Heart left ventricle (tissue), 16 donors: ENCODE measurements at regions of chr14 and their contacts with region 1.

Region 1: DNA sequence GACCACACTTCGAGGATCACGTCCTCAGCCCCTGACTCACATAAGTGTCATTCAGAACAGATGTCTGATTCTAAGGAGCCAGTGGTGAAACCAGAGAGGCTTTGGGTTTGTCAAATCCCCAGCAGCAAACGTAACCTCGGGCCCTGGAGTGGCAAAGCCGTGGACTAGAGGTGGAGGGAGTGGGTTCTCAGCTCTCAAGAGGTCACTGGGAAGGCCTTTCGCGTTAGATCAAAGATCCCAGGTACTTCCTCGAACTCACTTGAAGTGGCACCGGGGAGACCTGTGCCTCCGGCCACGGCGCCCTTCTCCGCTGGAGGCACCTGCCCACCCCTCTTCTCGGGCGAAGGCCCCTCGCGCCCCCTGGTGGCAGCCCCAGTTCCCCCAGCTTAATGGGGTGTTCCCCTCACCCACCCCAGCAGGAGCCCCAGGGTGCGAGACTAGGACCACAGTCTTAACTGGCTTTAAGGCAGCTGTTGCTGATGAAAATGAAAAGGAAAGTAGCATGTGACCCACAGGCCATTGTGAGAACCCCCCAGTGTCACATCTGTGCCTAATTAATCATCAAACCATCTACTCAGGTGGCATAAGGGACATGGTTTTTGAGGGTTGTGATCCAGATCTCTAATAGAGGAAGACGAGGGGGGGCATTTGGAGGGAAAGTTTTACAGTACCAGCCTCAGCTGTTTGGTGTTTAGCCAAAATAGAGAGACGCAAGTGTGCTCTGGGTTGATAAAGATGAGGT is 672 bp upstream of the ESR2 start:
- DNase-seq: peak; percentile 59 to 87 (median 72)
- ATAC-seq: peak; percentile 90 to 96 (median 93)
- H3K4me3 ChIP-seq: peak overlapping the region; percentile 6 to 63 (median 53)
- H3K27ac ChIP-seq: no peak overlapping the region
- H3K4me1 ChIP-seq: peaks cover 0 to 19% (median 11%) of the 10 kb centered on the region in 12 donors
- H3K27me3 ChIP-seq: peaks cover 0 to 43% (median 13%) of the 10 kb centered on the region in 9 donors
- CTCF ChIP-seq: peak; percentile 69 to 84 (median 76)
- POLR2A ChIP-seq: no peak

Region 2: DNA sequence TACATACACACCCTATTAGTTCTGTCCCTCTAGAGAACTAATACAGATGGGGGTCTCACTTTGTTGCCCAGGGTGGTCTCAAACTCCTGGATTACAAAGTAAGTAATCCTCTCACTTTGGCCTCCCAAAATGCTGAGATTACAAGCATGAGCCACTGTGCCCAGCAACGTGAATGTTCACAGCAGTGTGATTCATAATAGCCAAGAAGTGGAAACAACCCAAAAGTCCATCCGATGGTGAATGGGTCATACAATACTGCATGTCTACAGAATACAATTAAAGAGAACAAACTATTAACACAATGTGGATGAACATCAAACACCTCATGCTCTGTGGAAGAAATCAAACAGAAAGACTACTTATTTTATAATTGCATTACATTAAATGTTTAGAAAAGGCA is 499.3 kb before region 1 on chr14:
- intact Hi-C with region 1: loop called in 9 of 10 experiments (anchors 2 to 10 kb)
- DNase-seq: no peak
- ATAC-seq: no peak
- H3K4me3 ChIP-seq: no peak overlapping the region
- H3K27ac ChIP-seq: no peak overlapping the region
- H3K4me1 ChIP-seq: peaks cover 0 to 9% (median 0%) of the 10 kb centered on the region in 12 donors
- H3K27me3 ChIP-seq: no peaks in the 10 kb centered on the region
- CTCF ChIP-seq: no peak
- POLR2A ChIP-seq: no peak

Region 3: GRCh38 chr14:63800651-63801375 is 494.0 kb before region 1 on chr14:
- intact Hi-C with region 1: loop called in 9 of 10 experiments (anchors 2 to 10 kb)
- DNase-seq: no peak
- ATAC-seq: no peak
- H3K4me3 ChIP-seq: no peak overlapping the region
- H3K27ac ChIP-seq: no peak overlapping the region
- H3K4me1 ChIP-seq: peaks cover 0 to 9% (median 0%) of the 10 kb centered on the region in 12 donors
- H3K27me3 ChIP-seq: no peaks in the 10 kb centered on the region
- CTCF ChIP-seq: no peak
- POLR2A ChIP-seq: no peak

Region 4: GRCh38 chr14:64040044-64040443 is 254.8 kb before region 1 on chr14:
- intact Hi-C with region 1: loop called in 3 of 10 experiments (anchors 5 to 10 kb)
- DNase-seq: no peak
- ATAC-seq: no peak
- H3K4me3 ChIP-seq: no peak overlapping the region
- H3K27ac ChIP-seq: no peak overlapping the region
- H3K4me1 ChIP-seq: peaks cover 0 to 6% (median 0%) of the 10 kb centered on the region in 12 donors
- H3K27me3 ChIP-seq: no peaks in the 10 kb centered on the region
- CTCF ChIP-seq: peak in 6 of 12 donors; percentile 10 to 34 (median 30)
- POLR2A ChIP-seq: no peak

Region 5: GRCh38 chr14:64137657-64138290 is 157.1 kb before region 1 on chr14:
- intact Hi-C with region 1: loop called in 9 of 10 experiments (anchors 2 to 5 kb)
- DNase-seq: no peak
- ATAC-seq: peak in 1 of 4 donors; percentile 62
- H3K4me3 ChIP-seq: no peak overlapping the region
- H3K27ac ChIP-seq: no peak overlapping the region
- H3K4me1 ChIP-seq: no peaks in the 10 kb centered on the region
- H3K27me3 ChIP-seq: no peaks in the 10 kb centered on the region
- CTCF ChIP-seq: peak in 7 of 12 donors; percentile 23 to 49 (median 36)
- POLR2A ChIP-seq: no peak

Region 6: GRCh38 chr14:64159588-64159987 is 135.3 kb before region 1 on chr14:
- intact Hi-C with region 1: loop called in 5 of 10 experiments (anchors 5 to 10 kb)
- DNase-seq: no peak
- ATAC-seq: no peak
- H3K4me3 ChIP-seq: no peak overlapping the region
- H3K27ac ChIP-seq: no peak overlapping the region
- H3K4me1 ChIP-seq: no peaks in the 10 kb centered on the region
- H3K27me3 ChIP-seq: no peaks in the 10 kb centered on the region
- CTCF ChIP-seq: peak in 8 of 12 donors; percentile 18 to 45 (median 24)
- POLR2A ChIP-seq: no peak

Region 7: DNA sequence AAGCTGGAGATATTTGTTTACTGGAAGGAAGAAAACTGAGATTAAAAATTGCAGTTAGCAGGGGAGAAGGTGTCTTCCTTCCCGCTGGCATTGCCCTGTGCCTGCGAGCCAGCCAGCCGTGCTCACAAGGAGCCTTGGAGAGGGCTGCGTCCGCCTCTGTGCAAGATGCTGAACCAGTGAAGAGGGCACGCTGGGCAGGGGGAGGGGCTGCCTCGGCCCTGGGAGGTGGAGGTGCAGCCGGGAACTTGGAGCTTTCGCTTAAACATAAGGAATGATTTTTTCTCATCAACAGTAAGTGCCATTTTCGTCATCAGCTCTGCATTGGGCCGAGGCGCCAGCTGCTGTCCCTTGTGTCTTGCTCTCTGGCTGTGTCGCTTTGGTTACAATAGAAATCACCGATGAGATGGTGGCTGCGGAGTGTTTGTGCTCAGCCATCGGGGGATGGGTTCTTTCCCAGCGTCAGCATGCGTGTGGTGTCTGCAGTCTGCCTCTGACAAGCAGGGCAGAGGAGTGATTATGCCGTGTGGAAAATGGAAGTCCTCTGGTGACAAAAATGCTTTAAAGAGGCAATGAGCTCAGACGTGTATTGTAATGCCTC is 97.9 kb before region 1 on chr14:
- intact Hi-C with region 1: loop called in 1 of 10 experiments (anchors 10 kb)
- DNase-seq: peak; percentile 56 to 80 (median 72)
- ATAC-seq: peak; percentile 84 to 89 (median 86)
- H3K4me3 ChIP-seq: peak overlapping the region; percentile 4 to 65 (median 48)
- H3K27ac ChIP-seq: peak overlapping the region; percentile 34 to 89 (median 82)
- H3K4me1 ChIP-seq: peaks cover 0 to 70% (median 36%) of the 10 kb centered on the region in 12 donors
- H3K27me3 ChIP-seq: no peaks in the 10 kb centered on the region
- CTCF ChIP-seq: no peak
- POLR2A ChIP-seq: no peak